ENCODE measurements at regions of chr16 and their contacts with region 1.

Region 1: GRCh38 chr16:67480833-67481560 is at the start of gene ATP6V0D1:
- DNase-seq: peak; percentile 99
- ATAC-seq: peak; percentile 89
- H3K4me3 Mint-ChIP-seq: peak within 1 kb of the TSS; percentile 98
- H3K27ac Mint-ChIP-seq: peak within 1 kb of the TSS; percentile 99
- H3K4me1 Mint-ChIP-seq: peaks cover 38% of the 10 kb centered on the region
- H3K27me3 Mint-ChIP-seq: no peaks in the 10 kb centered on the region
- total RNA-seq, gene ATP6V0D1: 52.7 to 58.1 TPM

Region 2: GRCh38 chr16:67468731-67469130 is 12.3 kb before region 1 on chr16:
- CTCF ChIA-PET with region 1: interaction called, 11 read pairs
- POLR2A ChIA-PET with region 1: no interaction called
- DNase-seq: no peak
- ATAC-seq: no peak
- H3K4me3 Mint-ChIP-seq: no peak overlapping the region
- H3K27ac Mint-ChIP-seq: no peak overlapping the region
- H3K4me1 Mint-ChIP-seq: peaks cover 10% of the 10 kb centered on the region
- H3K27me3 Mint-ChIP-seq: no peaks in the 10 kb centered on the region

Region 3: GRCh38 chr16:67571981-67572431 is 91.0 kb after region 1 on chr16:
- CTCF ChIA-PET with region 1: no interaction called
- POLR2A ChIA-PET with region 1: no interaction called
- DNase-seq: no peak
- ATAC-seq: no peak
- H3K4me3 Mint-ChIP-seq: no peak overlapping the region
- H3K27ac Mint-ChIP-seq: peak overlapping the region; percentile 34
- H3K4me1 Mint-ChIP-seq: peaks cover 6% of the 10 kb centered on the region
- H3K27me3 Mint-ChIP-seq: no peaks in the 10 kb centered on the region

Region 4: GRCh38 chr16:67667817-67668494 is 187.0 kb after region 1 on chr16:
- CTCF ChIA-PET with region 1: interaction called, 13 read pairs
- POLR2A ChIA-PET with region 1: no interaction called
- DNase-seq: peak; percentile 90
- ATAC-seq: peak; percentile 85
- H3K4me3 Mint-ChIP-seq: peak overlapping the region; percentile 83
- H3K27ac Mint-ChIP-seq: peak overlapping the region; percentile 55
- H3K4me1 Mint-ChIP-seq: peaks cover 31% of the 10 kb centered on the region
- H3K27me3 Mint-ChIP-seq: no peaks in the 10 kb centered on the region